Heart right ventricle (tissue), 16 donors: ENCODE measurements at regions of chr12 and their contacts with region 1.

Region 1: DNA sequence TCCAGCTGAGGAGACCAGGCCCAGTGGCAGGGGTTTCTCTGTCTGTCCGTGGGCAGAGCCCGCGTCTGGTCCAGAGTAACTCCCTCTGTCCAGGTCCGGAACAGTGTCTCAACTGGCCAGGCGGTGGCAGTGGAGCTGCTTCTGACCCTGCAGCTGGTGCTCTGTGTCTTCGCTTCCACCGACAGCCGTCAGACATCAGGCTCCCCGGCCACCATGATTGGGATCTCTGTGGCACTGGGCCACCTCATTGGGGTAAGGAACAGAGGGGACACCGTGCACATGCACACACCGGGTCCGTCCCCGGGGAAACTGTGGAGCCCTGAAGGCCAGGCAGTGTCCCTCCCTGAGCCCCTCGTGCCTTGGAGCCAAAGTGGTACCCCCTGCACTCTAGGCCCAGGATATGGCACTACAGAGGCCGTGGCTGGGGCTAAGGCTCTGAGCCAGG is 1.5 kb downstream of the AQP6 start:
- DNase-seq: peak; percentile 67 to 69
- ATAC-seq: peak; percentile 85 to 94 (median 90)
- H3K4me3 ChIP-seq: no peak overlapping the region
- H3K27ac ChIP-seq: no peak overlapping the region
- H3K4me1 ChIP-seq: peaks cover 0 to 20% (median 5%) of the 10 kb centered on the region in 9 donors
- H3K27me3 ChIP-seq: peaks cover 0 to 35% (median 17%) of the 10 kb centered on the region in 7 donors
- CTCF ChIP-seq: peak; percentile 41 to 75 (median 63)

Region 2: DNA sequence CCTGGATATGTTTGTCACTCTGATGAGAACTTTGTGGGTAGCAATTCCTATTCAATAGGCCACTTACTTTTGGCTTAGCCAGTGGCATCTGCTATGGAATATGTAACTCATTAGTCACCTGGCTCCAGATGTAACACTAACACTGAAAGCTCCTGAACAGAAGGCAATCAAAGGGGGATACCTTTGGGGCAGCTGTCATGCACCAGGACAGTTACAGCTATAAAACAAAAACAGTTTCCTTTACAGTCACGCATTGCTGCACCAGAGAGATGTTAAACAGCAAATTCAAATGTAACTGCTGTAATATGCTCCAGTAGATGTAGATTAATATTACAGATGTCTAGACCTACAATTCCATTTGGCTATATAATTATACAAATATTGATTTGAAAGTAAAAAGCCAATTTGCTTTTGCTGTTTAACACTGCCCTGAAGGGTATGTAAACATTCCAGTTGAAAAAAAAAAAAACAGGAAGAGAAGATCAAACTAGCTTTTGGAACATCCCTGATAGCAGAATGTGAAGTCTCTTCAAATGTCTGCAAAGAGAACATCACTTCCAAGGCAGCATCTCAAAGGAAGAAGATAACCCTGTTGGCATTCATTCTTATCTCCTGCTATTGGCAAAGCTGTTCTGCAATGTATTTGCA is 32.7 kb after region 1 on chr12:
- intact Hi-C with region 1: no loop called
- DNase-seq: no peak
- ATAC-seq: no peak
- H3K4me3 ChIP-seq: no peak overlapping the region
- H3K27ac ChIP-seq: no peak overlapping the region
- H3K4me1 ChIP-seq: peaks cover 0 to 18% (median 0%) of the 10 kb centered on the region in 9 donors
- H3K27me3 ChIP-seq: no peaks in the 10 kb centered on the region
- CTCF ChIP-seq: no peak

Region 3: DNA sequence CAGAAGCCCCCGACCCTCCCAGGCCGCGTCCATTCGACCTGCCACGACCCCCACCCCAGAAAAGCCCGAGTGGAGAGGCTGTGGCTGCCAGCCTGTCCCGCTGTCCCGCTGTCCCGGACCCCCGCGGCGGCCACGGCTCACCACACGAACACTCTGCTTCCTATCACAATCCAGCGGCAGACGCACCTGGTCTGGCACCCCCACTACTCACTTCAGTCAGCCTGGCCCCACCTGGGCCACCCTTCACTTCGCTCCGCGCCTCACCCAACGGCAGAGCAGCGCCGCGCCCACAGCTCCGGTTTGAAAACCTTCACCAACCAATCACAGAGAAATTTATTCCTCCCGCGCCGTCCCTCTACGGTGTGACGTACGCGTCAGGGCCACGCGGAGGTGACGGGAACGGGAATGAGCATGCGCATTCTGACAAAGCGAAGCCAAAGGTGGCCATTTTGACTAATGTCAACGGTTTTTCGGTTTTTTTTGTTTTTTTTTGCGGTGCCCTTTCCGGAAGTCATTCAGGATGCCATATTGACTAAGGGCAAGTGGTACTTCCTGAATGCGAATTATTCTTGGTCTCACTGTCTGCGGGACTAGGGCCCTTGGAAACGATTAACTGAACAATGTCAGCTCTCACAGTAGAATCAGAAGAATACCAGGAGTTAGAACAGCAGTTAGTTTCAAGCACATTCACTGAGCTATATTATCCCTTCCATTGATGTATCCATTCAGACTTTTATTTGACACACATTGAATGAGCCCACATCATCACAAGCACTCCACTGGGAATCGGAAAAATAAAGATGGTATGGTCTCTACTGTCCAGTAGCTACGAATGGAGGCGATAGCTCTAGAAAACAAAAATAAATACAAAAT is 51.2 kb after region 1 on chr12 and contains the start of gene RACGAP1:
- intact Hi-C with region 1: loop called in 1 of 10 experiments (anchors 5 kb)
- DNase-seq: peak; percentile 90 to 97
- ATAC-seq: peak; percentile 98 to 100 (median 99)
- H3K4me3 ChIP-seq: peak within 1 kb of the TSS; percentile 51 to 90 (median 72)
- H3K27ac ChIP-seq: peak within 1 kb of the TSS in 8 of 10 donors; percentile 13 to 82 (median 48)
- H3K4me1 ChIP-seq: peaks cover 2 to 23% (median 9%) of the 10 kb centered on the region in 9 donors
- H3K27me3 ChIP-seq: peaks cover 0 to 4% (median 0%) of the 10 kb centered on the region in 7 donors
- CTCF ChIP-seq: no peak
- total RNA-seq, gene RACGAP1: 1.8 to 17.8 (median 4.0) TPM

Region 4: GRCh38 chr12:50055831-50056638 is 81.8 kb after region 1 on chr12:
- intact Hi-C with region 1: loop called in 8 of 10 experiments (anchors 1 to 5 kb)
- DNase-seq: peak in 1 of 2 donors; percentile 26
- ATAC-seq: peak in 7 of 8 donors; percentile 44 to 73 (median 61)
- H3K4me3 ChIP-seq: no peak overlapping the region
- H3K27ac ChIP-seq: no peak overlapping the region
- H3K4me1 ChIP-seq: peaks cover 2 to 48% (median 20%) of the 10 kb centered on the region in 9 donors
- H3K27me3 ChIP-seq: peaks cover 0 to 39% (median 19%) of the 10 kb centered on the region in 7 donors
- CTCF ChIP-seq: peak; percentile 80 to 97 (median 95)

Region 5: GRCh38 chr12:50111693-50112455 is 137.6 kb after region 1 on chr12 and contains the start of gene COX14:
- intact Hi-C with region 1: no loop called
- DNase-seq: peak; percentile 98 to 99
- ATAC-seq: peak; percentile 88 to 95 (median 92)
- H3K4me3 ChIP-seq: peak within 1 kb of the TSS; percentile 70 to 100 (median 96)
- H3K27ac ChIP-seq: peak within 1 kb of the TSS; percentile 83 to 98 (median 96)
- H3K4me1 ChIP-seq: peaks cover 16 to 68% (median 53%) of the 10 kb centered on the region in 9 donors
- H3K27me3 ChIP-seq: no peaks in the 10 kb centered on the region
- CTCF ChIP-seq: peak; percentile 84 to 100 (median 92)
- total RNA-seq, gene COX14: 144 to 239 (median 170) TPM